OCI-LY7 (cell line): ENCODE measurements at regions of chr4 and their contacts with region 1.

Region 1: GRCh38 chr4:42678512-42678911 is 21.6 kb upstream of the ATP8A1 start:
- DNase-seq: peak; percentile 65
- H3K4me3 ChIP-seq: peak overlapping the region; percentile 15
- H3K27ac ChIP-seq: peak overlapping the region; percentile 64
- H3K4me1 ChIP-seq: peaks cover 23% of the 10 kb centered on the region
- CTCF ChIP-seq: no peak

Region 2: GRCh38 chr4:42690537-42690936 is 12.0 kb after region 1 on chr4:
- CTCF ChIA-PET with region 1: interaction called, 3 read pairs
- POLR2A ChIA-PET with region 1: interaction called, 54 read pairs
- intact Hi-C with region 1: no loop called
- DNase-seq: no peak
- H3K4me3 ChIP-seq: no peak overlapping the region
- H3K27ac ChIP-seq: no peak overlapping the region
- H3K4me1 ChIP-seq: no peaks in the 10 kb centered on the region
- CTCF ChIP-seq: no peak

Region 3: DNA sequence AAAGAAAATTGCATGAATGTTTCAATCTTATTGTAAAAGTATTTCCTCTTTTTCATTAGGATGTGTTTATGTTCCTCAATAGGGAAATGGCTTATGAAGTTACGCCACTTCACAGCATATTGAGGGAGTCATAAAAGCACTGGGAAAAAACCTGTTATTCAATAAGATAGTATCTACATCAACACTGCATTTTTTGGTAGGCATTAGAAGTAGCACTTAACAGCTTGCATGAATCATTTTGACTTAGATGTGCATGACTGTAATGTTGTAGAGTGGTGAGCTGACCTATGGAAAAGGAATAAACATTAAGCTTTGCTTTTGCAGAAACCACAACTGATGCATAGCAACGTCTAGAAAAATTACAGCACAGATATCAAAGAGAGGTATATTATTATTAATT is 102.8 kb after region 1 on chr4:
- CTCF ChIA-PET with region 1: no interaction called
- POLR2A ChIA-PET with region 1: no interaction called
- intact Hi-C with region 1: no loop called
- DNase-seq: no peak
- H3K4me3 ChIP-seq: no peak overlapping the region
- H3K27ac ChIP-seq: no peak overlapping the region
- H3K4me1 ChIP-seq: no peaks in the 10 kb centered on the region
- CTCF ChIP-seq: no peak

Region 4: GRCh38 chr4:43113196-43113595 is 434.7 kb after region 1 on chr4:
- CTCF ChIA-PET with region 1: no interaction called
- POLR2A ChIA-PET with region 1: no interaction called
- intact Hi-C with region 1: no loop called
- DNase-seq: no peak
- H3K4me3 ChIP-seq: no peak overlapping the region
- H3K27ac ChIP-seq: no peak overlapping the region
- H3K4me1 ChIP-seq: no peaks in the 10 kb centered on the region
- CTCF ChIP-seq: no peak